Posterior cingulate gyrus (tissue), 11 donors: ENCODE measurements at regions of chr13 and their contacts with region 1.

Region 1: GRCh38 chr13:74287724-74288169 is 153.5 kb upstream of the KLF12 start:
- DNase-seq: peak; percentile 41 to 96 (median 77)

Region 2: DNA sequence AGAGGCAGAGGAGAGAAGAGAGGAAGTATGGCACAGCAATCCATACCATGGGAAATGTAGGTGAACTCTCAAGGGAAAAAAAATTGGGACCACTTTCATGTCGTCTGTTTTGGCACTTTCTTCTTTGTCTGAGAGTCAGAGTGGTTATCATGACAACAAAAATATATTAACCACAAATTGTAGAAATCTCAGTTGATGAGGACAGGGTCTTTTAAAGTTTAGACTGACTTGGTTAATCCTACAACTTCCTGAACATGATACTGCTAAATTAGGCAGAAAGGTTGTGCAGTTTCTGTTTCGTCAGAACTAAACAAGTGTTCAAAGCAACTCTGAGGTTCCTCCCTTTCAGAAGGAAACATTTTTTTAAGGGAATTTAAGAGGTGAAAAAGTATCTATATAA is 1213.7 kb before region 1 on chr13:
- intact Hi-C with region 1: no loop called
- DNase-seq: no peak

Region 3: GRCh38 chr13:73754727-73755292 is 532.9 kb before region 1 on chr13:
- intact Hi-C with region 1: loop called (anchors 10 kb)
- DNase-seq: no peak

Region 4: DNA sequence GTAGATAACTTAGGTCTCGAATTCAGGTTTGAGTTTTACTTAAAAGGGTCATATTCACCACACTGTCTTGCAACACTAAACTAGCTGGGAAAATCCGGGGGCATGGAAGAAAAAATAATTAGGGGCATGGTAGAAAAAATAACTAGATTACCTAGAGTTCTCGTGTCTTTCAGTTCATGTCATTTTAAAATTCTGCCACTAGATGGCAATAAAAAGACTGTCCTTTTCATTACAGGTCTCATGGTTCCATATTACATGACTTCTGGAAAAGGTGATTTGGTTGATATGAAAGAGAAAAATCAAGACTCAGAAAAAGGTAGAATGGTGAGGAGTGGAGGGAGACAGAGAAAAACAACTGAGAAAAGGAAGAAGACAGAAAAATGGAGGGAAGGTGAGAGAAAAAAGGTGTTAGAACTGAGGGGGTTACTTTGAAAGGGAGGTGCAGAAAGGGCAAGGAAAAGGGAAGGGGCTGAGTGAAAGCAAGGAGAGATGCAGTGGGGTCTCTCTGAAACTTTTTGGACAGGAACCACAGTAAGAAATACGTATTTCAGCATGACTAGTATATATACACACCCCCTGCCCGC is 452.5 kb before region 1 on chr13:
- intact Hi-C with region 1: loop called (anchors 10 kb)
- DNase-seq: no peak

Region 5: DNA sequence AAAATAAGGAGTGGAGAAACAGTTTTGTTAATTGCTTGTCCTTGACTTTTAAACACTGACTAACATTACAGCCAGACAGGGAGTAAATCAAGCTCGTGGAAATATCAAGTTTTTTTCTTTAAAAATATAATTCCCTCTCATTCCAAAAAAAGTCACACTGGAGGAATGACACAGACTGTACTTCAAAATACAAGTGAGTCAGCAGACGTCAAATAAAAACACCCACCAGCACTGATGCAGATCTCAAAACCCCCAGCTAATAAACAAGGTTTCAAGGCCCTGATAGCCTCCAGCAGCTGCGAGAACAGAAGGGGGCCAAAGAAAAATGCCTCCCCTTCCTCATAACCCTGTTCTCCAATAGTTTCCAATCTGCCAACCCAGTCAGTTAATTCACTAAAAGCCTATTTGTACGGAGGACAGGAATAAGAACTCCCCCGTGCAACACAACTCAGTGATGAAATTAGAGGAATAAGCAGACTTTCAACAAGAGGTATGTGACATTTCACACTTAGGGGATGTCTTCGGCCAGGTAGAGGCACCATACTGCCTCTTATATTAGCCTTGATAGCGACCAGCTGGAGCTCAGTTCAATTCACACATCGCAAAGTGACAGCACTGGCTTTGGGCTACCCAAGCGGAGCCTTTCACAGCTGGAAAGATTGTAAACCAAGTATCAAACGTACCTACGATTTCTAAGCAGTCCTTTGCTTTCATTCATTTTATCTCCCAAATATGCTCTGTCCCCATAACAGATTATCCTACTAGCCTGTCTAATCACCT is 407.5 kb after region 1 on chr13:
- intact Hi-C with region 1: no loop called
- DNase-seq: no peak